ENCODE measurements at regions of chr9 and their contacts with region 1.

Region 1: DNA sequence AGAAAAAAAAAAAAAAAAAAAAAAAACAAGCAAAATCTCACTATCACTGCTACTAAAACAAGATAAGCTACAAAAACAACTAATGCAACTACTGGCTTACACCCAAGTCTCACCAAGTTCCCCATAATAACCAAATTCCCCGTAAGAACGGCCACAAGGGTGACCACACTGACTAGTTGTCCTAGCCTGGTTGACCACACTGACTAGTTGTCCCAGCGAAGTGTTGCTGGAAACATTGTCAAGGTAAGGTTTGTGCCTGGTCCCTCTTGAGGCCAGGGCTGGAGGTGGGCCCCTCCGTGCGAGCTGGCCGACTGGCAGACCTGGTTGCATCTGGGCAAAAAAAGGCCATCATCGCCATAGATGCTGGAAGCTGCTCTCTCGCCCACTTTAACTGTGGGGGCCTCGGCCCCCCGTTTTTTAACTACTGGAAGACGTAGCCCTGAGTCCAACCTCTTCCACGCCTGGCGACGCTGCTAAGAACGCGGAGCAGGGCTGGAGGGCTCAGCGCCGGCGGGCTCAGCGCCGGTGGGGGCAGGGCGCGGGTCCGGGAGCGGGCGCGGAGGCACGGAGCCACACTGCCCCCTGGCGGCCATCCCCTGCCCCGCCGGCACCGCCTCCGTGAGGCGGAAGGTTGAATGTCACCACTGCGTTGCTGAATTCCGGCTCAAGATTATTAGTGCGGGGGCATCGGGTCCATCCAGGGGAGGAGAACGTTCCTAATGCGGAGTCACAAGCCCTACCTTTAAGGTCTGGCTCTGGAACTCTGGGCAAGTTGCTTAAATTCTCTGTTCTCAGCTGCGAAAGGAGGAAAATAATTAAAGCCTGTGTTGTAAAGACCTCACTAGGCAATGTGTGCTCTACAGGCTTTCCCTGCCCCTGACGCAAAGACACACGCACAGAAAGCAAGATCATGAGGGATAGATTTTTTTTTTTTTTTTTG is 84.0 kb downstream of the HSD17B3 start:
- ATAC-seq: peak; percentile 82 to 99 (median 96)
- H3K4me3 ChIP-seq: peak overlapping the region; percentile 14 to 29 (median 18)
- H3K27ac ChIP-seq: peak overlapping the region in 1 of 2 donors; percentile 54
- H3K4me1 ChIP-seq: peaks cover 22 to 31% of the 10 kb centered on the region in 2 donors

Region 2: GRCh38 chr9:95317119-95317892 is 900.7 kb before region 1 on chr9 and contains the start of gene FANCC:
- in situ Hi-C with region 1: loop called in 1 of 9 experiments (anchors 25 kb)
- ATAC-seq: peak; percentile 82 to 94 (median 91)
- H3K4me3 ChIP-seq: peak within 1 kb of the TSS; percentile 56 to 80 (median 60)
- H3K27ac ChIP-seq: peak within 1 kb of the TSS; percentile 97
- H3K4me1 ChIP-seq: peaks cover 13 to 29% of the 10 kb centered on the region in 2 donors
- total RNA-seq, gene FANCC: 1.2 to 31.3 (median 11.9) TPM

Region 3: GRCh38 chr9:95510709-95511615 is 707.1 kb before region 1 on chr9:
- in situ Hi-C with region 1: loop called in 3 of 9 experiments (anchors 25 kb)
- ATAC-seq: peak; percentile 55 to 75 (median 62)
- H3K4me3 ChIP-seq: peak overlapping the region; percentile 77 to 92 (median 87)
- H3K27ac ChIP-seq: peak overlapping the region; percentile 89 to 94
- H3K4me1 ChIP-seq: peaks cover 7 to 10% of the 10 kb centered on the region in 2 donors

Region 4: GRCh38 chr9:95545831-95546567 is 672.0 kb before region 1 on chr9:
- in situ Hi-C with region 1: loop called in 1 of 9 experiments (anchors 25 kb)
- ATAC-seq: peak in 2 of 8 experiments; percentile 27 to 63
- H3K4me3 ChIP-seq: no peak overlapping the region
- H3K27ac ChIP-seq: no peak overlapping the region
- H3K4me1 ChIP-seq: no peaks in the 10 kb centered on the region

Region 5: DNA sequence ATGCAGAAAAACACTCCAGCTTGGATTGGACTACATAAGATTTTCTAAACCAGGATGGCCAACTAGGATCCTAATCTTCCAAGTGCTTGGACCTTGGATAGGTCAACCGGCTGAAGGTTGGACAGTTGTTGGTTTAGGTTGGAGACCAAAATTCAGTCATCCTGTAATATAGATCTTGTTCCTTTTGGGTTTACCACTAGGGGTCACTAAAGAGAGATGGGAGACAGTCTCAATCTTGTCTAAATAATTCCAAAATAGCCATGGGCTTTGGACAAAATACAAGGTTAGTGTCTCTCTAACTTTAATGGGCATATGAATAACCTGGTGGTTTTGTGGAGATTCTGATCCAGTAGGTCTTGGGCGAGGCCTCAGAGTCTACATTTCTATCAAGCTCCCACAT is 491.3 kb before region 1 on chr9:
- in situ Hi-C with region 1: loop called in 1 of 9 experiments (anchors 10 kb)
- ATAC-seq: peak in 3 of 8 experiments; percentile 72 to 76 (median 76)
- H3K4me3 ChIP-seq: no peak overlapping the region
- H3K27ac ChIP-seq: no peak overlapping the region
- H3K4me1 ChIP-seq: no peaks in the 10 kb centered on the region

Region 6: GRCh38 chr9:95875305-95876137 is 342.5 kb before region 1 on chr9 and contains the start of gene ERCC6L2:
- in situ Hi-C with region 1: loop called in 1 of 9 experiments (anchors 25 kb)
- ATAC-seq: peak; percentile 85 to 91 (median 89)
- H3K4me3 ChIP-seq: no peak within 1 kb of the TSS
- H3K27ac ChIP-seq: no peak within 1 kb of the TSS
- H3K4me1 ChIP-seq: peaks cover 8 to 12% of the 10 kb centered on the region in 2 donors
- total RNA-seq, gene ERCC6L2: 41.4 to 80.6 (median 63.1) TPM

Region 7: GRCh38 chr9:96289392-96289791 is 71.4 kb after region 1 on chr9:
- in situ Hi-C with region 1: no loop called
- ATAC-seq: peak in 2 of 8 experiments; percentile 17 to 41
- H3K4me3 ChIP-seq: no peak overlapping the region
- H3K27ac ChIP-seq: no peak overlapping the region
- H3K4me1 ChIP-seq: peaks cover 19 to 23% of the 10 kb centered on the region in 2 donors

Measured in motor neuron (in vitro differentiated cells).